Caco-2 (cell line): ENCODE measurements at regions of chr5 and their contacts with region 1.

Region 1: GRCh38 chr5:65102828-65103711 is 334.3 kb downstream of the CWC27 start:
- DNase-seq: peak; percentile 79 to 84
- H3K4me3 ChIP-seq: peak overlapping the region; percentile 57
- H3K4me3 Mint-ChIP-seq: peak overlapping the region; percentile 80
- H3K27ac Mint-ChIP-seq: peak overlapping the region; percentile 81
- H3K4me1 ChIP-seq: peaks cover 13% of the 10 kb centered on the region
- H3K4me1 Mint-ChIP-seq: peaks cover 24% of the 10 kb centered on the region
- H3K27me3 ChIP-seq: no peaks in the 10 kb centered on the region
- H3K27me3 Mint-ChIP-seq: no peaks in the 10 kb centered on the region
- CTCF ChIP-seq: peak; percentile 35 to 43

Region 2: GRCh38 chr5:64811050-64811640 is 291.9 kb before region 1 on chr5:
- CTCF ChIA-PET with region 1: interaction called, 10 read pairs
- POLR2A ChIA-PET with region 1: no interaction called
- intact Hi-C with region 1: loop called (anchors 1 kb)
- DNase-seq: peak in 1 of 2 experiments; percentile 32
- H3K4me3 ChIP-seq: no peak overlapping the region
- H3K4me3 Mint-ChIP-seq: no peak overlapping the region
- H3K27ac Mint-ChIP-seq: no peak overlapping the region
- H3K4me1 ChIP-seq: no peaks in the 10 kb centered on the region
- H3K4me1 Mint-ChIP-seq: no peaks in the 10 kb centered on the region
- H3K27me3 ChIP-seq: no peaks in the 10 kb centered on the region
- H3K27me3 Mint-ChIP-seq: no peaks in the 10 kb centered on the region
- CTCF ChIP-seq: peak; percentile 58 to 68

Region 3: GRCh38 chr5:64946739-64947430 is 156.2 kb before region 1 on chr5:
- CTCF ChIA-PET with region 1: no interaction called
- POLR2A ChIA-PET with region 1: no interaction called
- intact Hi-C with region 1: no loop called
- DNase-seq: no peak
- H3K4me3 ChIP-seq: no peak overlapping the region
- H3K4me3 Mint-ChIP-seq: no peak overlapping the region
- H3K27ac Mint-ChIP-seq: no peak overlapping the region
- H3K4me1 ChIP-seq: no peaks in the 10 kb centered on the region
- H3K4me1 Mint-ChIP-seq: peaks cover 11% of the 10 kb centered on the region
- H3K27me3 ChIP-seq: no peaks in the 10 kb centered on the region
- H3K27me3 Mint-ChIP-seq: no peaks in the 10 kb centered on the region
- CTCF ChIP-seq: no peak

Region 4: DNA sequence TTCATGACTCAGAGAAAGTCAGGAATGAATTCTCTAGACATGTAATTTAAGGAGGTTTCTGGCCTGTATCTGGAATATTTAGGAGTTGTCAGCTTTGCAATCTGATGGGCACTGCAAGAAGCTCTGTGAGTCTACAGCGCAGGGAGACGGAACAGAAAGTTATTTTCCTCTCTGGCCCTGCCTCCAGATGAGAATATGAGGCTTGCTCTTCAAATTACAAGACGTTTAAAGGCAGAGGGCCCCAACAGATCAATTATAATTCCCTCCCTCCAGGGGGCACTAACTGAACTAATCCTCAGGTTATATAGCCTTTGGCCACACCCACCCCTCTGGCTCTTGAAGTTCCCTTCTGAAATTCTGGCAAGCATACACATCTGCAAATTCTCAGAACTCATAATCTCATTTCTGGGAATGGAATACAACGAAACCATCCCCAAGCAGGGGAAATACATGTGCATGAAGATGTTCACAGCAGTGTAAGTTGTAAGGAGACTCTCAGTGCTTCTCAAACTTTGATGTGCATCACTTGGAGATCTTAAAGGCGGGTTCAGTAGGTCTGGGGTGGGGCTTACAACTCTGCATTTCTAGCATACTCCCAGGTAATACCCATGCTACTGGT is 26.7 kb before region 1 on chr5:
- CTCF ChIA-PET with region 1: no interaction called
- POLR2A ChIA-PET with region 1: no interaction called
- intact Hi-C with region 1: loop called (anchors 1 kb)
- DNase-seq: peak; percentile 56 to 61
- H3K4me3 ChIP-seq: no peak overlapping the region
- H3K4me3 Mint-ChIP-seq: no peak overlapping the region
- H3K27ac Mint-ChIP-seq: no peak overlapping the region
- H3K4me1 ChIP-seq: peaks cover 7% of the 10 kb centered on the region; the same call in 1 of the 2 replicates
- H3K4me1 Mint-ChIP-seq: no peaks in the 10 kb centered on the region
- H3K27me3 ChIP-seq: peaks cover 1% of the 10 kb centered on the region; the same call in 1 of the 2 replicates
- H3K27me3 Mint-ChIP-seq: no peaks in the 10 kb centered on the region
- CTCF ChIP-seq: peak; percentile 8 to 15

Region 5: DNA sequence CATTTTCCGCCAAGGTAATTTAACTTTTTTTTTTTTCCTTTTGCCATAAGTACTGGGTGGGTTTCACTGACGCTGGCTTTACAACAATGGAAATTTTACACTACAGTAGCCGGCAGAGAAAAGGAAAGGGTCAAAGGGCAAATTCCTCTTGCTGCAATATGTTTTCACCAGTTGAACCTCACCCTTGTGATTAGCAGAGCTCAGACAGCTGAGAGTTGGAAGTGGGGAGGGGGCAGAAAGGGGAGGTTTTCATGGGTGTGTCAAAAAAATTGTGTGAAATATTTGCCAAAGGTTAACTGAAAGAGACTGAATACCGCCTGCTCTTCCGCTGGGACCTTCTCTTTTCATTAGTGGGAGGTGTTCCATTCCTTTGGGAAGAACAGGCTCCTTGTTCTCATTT is 81.7 kb after region 1 on chr5:
- CTCF ChIA-PET with region 1: no interaction called
- POLR2A ChIA-PET with region 1: no interaction called
- intact Hi-C with region 1: loop called (anchors 1 kb)
- DNase-seq: peak; percentile 77 to 84
- H3K4me3 ChIP-seq: no peak overlapping the region
- H3K4me3 Mint-ChIP-seq: peak overlapping the region; percentile 57
- H3K27ac Mint-ChIP-seq: peak overlapping the region; percentile 84
- H3K4me1 ChIP-seq: peaks cover 19% of the 10 kb centered on the region
- H3K4me1 Mint-ChIP-seq: peaks cover 30% of the 10 kb centered on the region
- H3K27me3 ChIP-seq: no peaks in the 10 kb centered on the region
- H3K27me3 Mint-ChIP-seq: no peaks in the 10 kb centered on the region
- CTCF ChIP-seq: no peak

Region 6: GRCh38 chr5:65255294-65255693 is 152.2 kb after region 1 on chr5:
- CTCF ChIA-PET with region 1: no interaction called
- POLR2A ChIA-PET with region 1: no interaction called
- intact Hi-C with region 1: loop called (anchors 5 kb)
- DNase-seq: no peak
- H3K4me3 ChIP-seq: no peak overlapping the region
- H3K4me3 Mint-ChIP-seq: no peak overlapping the region
- H3K27ac Mint-ChIP-seq: no peak overlapping the region
- H3K4me1 ChIP-seq: no peaks in the 10 kb centered on the region
- H3K4me1 Mint-ChIP-seq: no peaks in the 10 kb centered on the region
- H3K27me3 ChIP-seq: no peaks in the 10 kb centered on the region
- H3K27me3 Mint-ChIP-seq: peaks cover 5% of the 10 kb centered on the region
- CTCF ChIP-seq: no peak

Region 7: DNA sequence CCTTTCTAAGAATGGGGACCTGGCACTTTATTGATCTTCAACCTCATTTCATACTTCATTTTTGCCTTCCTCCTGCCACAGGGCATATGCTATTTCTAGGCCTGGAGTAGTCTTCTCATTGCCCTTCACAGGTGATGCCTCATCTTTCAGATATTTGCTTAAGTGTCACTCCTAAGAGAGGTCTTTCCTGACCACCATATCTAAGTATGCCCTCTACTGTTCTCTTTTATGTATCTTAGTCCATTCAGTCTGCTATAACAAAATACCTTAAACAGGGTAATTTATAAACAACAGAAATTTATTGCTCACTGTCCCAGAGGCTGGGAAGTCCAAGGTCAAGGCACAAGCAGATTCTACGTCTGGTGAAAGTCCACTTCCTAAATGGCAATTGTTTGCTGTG is 279.5 kb after region 1 on chr5:
- CTCF ChIA-PET with region 1: no interaction called
- POLR2A ChIA-PET with region 1: no interaction called
- intact Hi-C with region 1: loop called (anchors 5 kb)
- DNase-seq: no peak
- H3K4me3 ChIP-seq: no peak overlapping the region
- H3K4me3 Mint-ChIP-seq: no peak overlapping the region
- H3K27ac Mint-ChIP-seq: no peak overlapping the region
- H3K4me1 ChIP-seq: no peaks in the 10 kb centered on the region
- H3K4me1 Mint-ChIP-seq: no peaks in the 10 kb centered on the region
- H3K27me3 ChIP-seq: no peaks in the 10 kb centered on the region
- H3K27me3 Mint-ChIP-seq: no peaks in the 10 kb centered on the region
- CTCF ChIP-seq: no peak